ENCODE measurements at regions of chr2 and their contacts with region 1.

Region 1: GRCh38 chr2:61520261-61520660 is 17.9 kb downstream of the XPO1 start:
- DNase-seq: no peak
- ATAC-seq: no peak
- H3K4me3 ChIP-seq: no peak overlapping the region
- H3K4me3 Mint-ChIP-seq: no peak overlapping the region
- H3K27ac ChIP-seq: no peak overlapping the region
- H3K27ac Mint-ChIP-seq: no peak overlapping the region
- H3K4me1 ChIP-seq: peaks cover 0 to 5% of the 10 kb centered on the region in 2 experiments
- H3K4me1 Mint-ChIP-seq: peaks cover 18 to 43% (median 33%) of the 10 kb centered on the region in 3 donors
- H3K27me3 ChIP-seq: no peaks in the 10 kb centered on the region
- H3K27me3 Mint-ChIP-seq: no peaks in the 10 kb centered on the region

Region 2: GRCh38 chr2:60806988-60807681 is 713.1 kb before region 1 on chr2:
- CTCF ChIA-PET with region 1: interaction called in 1 of 2 experiments, 12 read pairs
- POLR2A ChIA-PET with region 1: no interaction called
- DNase-seq: peak in 24 of 35 experiments; percentile 5 to 69 (median 20)
- ATAC-seq: peak; percentile 59 to 74 (median 70)
- H3K4me3 ChIP-seq: no peak overlapping the region
- H3K4me3 Mint-ChIP-seq: peak overlapping the region; percentile 8 to 34 (median 26)
- H3K27ac ChIP-seq: peak overlapping the region; percentile 68
- H3K27ac Mint-ChIP-seq: peak overlapping the region; percentile 88 to 92
- H3K4me1 ChIP-seq: peaks cover 17 to 29% of the 10 kb centered on the region in 2 experiments
- H3K4me1 Mint-ChIP-seq: peaks cover 41 to 53% (median 47%) of the 10 kb centered on the region in 3 donors
- H3K27me3 ChIP-seq: no peaks in the 10 kb centered on the region
- H3K27me3 Mint-ChIP-seq: no peaks in the 10 kb centered on the region

Region 3: GRCh38 chr2:61011678-61012077 is 508.6 kb before region 1 on chr2:
- CTCF ChIA-PET with region 1: no interaction called
- POLR2A ChIA-PET with region 1: no interaction called
- DNase-seq: no peak
- ATAC-seq: no peak
- H3K4me3 ChIP-seq: no peak overlapping the region
- H3K4me3 Mint-ChIP-seq: no peak overlapping the region
- H3K27ac ChIP-seq: no peak overlapping the region
- H3K27ac Mint-ChIP-seq: no peak overlapping the region
- H3K4me1 ChIP-seq: peaks cover 2 to 4% of the 10 kb centered on the region in 2 experiments
- H3K4me1 Mint-ChIP-seq: peaks cover 6 to 19% (median 11%) of the 10 kb centered on the region in 3 donors
- H3K27me3 ChIP-seq: no peaks in the 10 kb centered on the region
- H3K27me3 Mint-ChIP-seq: no peaks in the 10 kb centered on the region

Region 4: DNA sequence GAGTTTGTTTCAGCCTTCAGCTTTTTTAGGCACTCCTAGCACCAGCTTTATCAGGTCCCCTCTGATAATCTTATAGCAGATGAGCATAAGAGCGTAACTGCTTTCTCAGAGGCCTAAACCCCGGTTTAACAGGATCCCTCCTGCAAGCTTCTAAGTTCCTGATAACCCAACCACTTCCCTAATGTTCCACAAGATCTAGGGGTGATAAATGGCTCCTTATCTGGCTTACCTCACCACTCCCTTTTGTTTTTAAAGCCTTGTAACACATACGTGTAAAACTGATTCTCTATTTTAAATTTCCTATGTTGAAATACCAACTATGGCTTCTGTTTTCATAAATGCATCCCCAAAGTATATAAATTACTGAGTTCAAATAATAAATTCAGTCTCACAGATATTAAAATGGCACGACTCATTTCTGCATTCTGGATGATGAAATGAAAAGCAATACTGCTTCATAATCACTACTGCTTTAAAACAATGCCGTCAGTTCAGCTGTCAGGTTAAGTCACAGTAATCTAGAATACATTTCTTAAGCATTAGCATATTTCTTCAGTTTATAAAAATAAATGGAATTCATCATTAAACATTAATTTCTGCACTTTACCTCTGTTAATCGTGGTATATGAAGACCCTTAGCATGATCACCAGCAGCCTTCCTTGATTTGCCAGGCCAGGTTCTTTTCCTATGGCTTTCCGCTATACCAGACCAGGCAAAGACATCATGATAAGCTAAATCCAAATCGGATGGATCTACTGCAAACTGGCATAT is 232.0 kb before region 1 on chr2:
- CTCF ChIA-PET with region 1: no interaction called
- POLR2A ChIA-PET with region 1: no interaction called
- DNase-seq: no peak
- ATAC-seq: no peak
- H3K4me3 ChIP-seq: no peak overlapping the region
- H3K4me3 Mint-ChIP-seq: no peak overlapping the region
- H3K27ac ChIP-seq: no peak overlapping the region
- H3K27ac Mint-ChIP-seq: no peak overlapping the region
- H3K4me1 ChIP-seq: no peaks in the 10 kb centered on the region
- H3K4me1 Mint-ChIP-seq: peaks cover 0 to 11% (median 8%) of the 10 kb centered on the region in 3 donors
- H3K27me3 ChIP-seq: no peaks in the 10 kb centered on the region
- H3K27me3 Mint-ChIP-seq: no peaks in the 10 kb centered on the region

Region 5: DNA sequence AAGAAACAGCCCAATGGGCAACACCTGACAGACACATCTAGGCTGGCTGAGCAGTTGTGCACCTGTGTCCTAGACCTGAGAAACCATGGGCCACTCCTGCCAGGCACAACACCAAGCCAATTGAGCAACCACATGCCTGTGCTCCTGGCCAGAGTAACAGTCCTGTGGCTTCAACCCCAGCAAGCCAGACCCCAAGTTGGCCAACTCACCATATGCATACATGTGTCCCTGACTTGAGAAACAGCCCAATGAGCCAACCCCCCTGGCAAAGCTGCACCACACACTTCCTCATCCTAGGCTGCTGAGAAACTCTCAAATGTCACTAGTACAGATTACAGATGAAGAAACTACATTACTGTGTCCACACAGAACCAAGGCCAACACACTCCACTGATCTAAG is 85.9 kb before region 1 on chr2:
- CTCF ChIA-PET with region 1: no interaction called
- POLR2A ChIA-PET with region 1: no interaction called
- DNase-seq: peak in 1 of 35 experiments; percentile 17
- ATAC-seq: no peak
- H3K4me3 ChIP-seq: no peak overlapping the region
- H3K4me3 Mint-ChIP-seq: peak overlapping the region in 1 of 3 donors; percentile 37
- H3K27ac ChIP-seq: no peak overlapping the region
- H3K27ac Mint-ChIP-seq: peak overlapping the region; percentile 48 to 88
- H3K4me1 ChIP-seq: peaks cover 0 to 31% of the 10 kb centered on the region in 2 experiments
- H3K4me1 Mint-ChIP-seq: peaks cover 59 to 63% (median 61%) of the 10 kb centered on the region in 3 donors
- H3K27me3 ChIP-seq: no peaks in the 10 kb centered on the region
- H3K27me3 Mint-ChIP-seq: no peaks in the 10 kb centered on the region

Region 6: DNA sequence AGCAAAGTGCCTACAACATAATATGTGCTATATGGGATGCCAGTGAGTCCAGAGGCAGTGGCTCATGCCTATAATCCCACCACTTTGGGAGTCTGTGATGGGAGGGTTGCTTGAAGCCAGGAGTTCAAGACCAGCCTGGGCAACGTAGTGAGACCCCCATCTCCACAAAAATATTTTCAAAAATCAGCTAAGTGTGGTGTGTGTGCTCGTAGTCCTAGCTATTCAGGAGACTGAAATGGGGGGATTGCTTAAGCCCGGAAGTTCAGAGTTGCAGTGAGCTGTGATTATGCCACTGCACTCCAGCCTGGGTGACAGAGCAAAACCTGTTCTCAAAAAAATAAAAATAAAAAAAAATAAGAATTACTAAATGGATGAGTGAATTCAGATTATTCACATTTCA is 1553.7 kb after region 1 on chr2:
- CTCF ChIA-PET with region 1: no interaction called
- POLR2A ChIA-PET with region 1: no interaction called
- DNase-seq: no peak
- ATAC-seq: no peak
- H3K4me3 ChIP-seq: no peak overlapping the region
- H3K4me3 Mint-ChIP-seq: no peak overlapping the region
- H3K27ac ChIP-seq: no peak overlapping the region
- H3K27ac Mint-ChIP-seq: no peak overlapping the region
- H3K4me1 ChIP-seq: no peaks in the 10 kb centered on the region
- H3K4me1 Mint-ChIP-seq: no peaks in the 10 kb centered on the region
- H3K27me3 ChIP-seq: peaks cover 0 to 3% of the 10 kb centered on the region in 2 experiments
- H3K27me3 Mint-ChIP-seq: peaks cover 25 to 32% of the 10 kb centered on the region in 2 donors

Measured in T-cell (primary cell).